ENCODE measurements at regions of chr1 and their contacts with region 1.

Region 1: GRCh38 chr1:1250786-1251284 is 4.3 kb upstream of the C1QTNF12 start:
- DNase-seq: no peak
- H3K4me3 ChIP-seq: no peak overlapping the region
- H3K27ac ChIP-seq: no peak overlapping the region
- H3K4me1 ChIP-seq: peaks cover 0 to 16% (median 10%) of the 10 kb centered on the region in 4 experiments
- H3K27me3 ChIP-seq: peaks cover 0 to 28% (median 6%) of the 10 kb centered on the region in 5 experiments

Region 2: GRCh38 chr1:1225238-1225845 is 25.5 kb before region 1 on chr1:
- CTCF ChIA-PET with region 1: no interaction called
- POLR2A ChIA-PET with region 1: no interaction called
- DNase-seq: no peak
- H3K4me3 ChIP-seq: no peak overlapping the region
- H3K27ac ChIP-seq: no peak overlapping the region
- H3K4me1 ChIP-seq: peaks cover 0 to 9% (median 7%) of the 10 kb centered on the region in 4 experiments
- H3K27me3 ChIP-seq: no peaks in the 10 kb centered on the region

Region 3: GRCh38 chr1:1237874-1238701 is 12.7 kb before region 1 on chr1:
- CTCF ChIA-PET with region 1: interaction called, 11 read pairs
- POLR2A ChIA-PET with region 1: no interaction called
- DNase-seq: no peak
- H3K4me3 ChIP-seq: no peak overlapping the region
- H3K27ac ChIP-seq: no peak overlapping the region
- H3K4me1 ChIP-seq: peaks cover 0 to 11% (median 6%) of the 10 kb centered on the region in 4 experiments
- H3K27me3 ChIP-seq: peaks cover 0 to 34% (median 0%) of the 10 kb centered on the region in 5 experiments